CD8-positive, alpha-beta T cell (primary cell): ENCODE measurements at regions of chr10 and their contacts with region 1.

Region 1: GRCh38 chr10:67779465-67780203 is 58.4 kb downstream of the DNAJC12 start:
- DNase-seq: peak; percentile 28 to 87 (median 68)
- ATAC-seq: peak; percentile 85
- H3K4me3 ChIP-seq: no peak overlapping the region
- H3K4me3 Mint-ChIP-seq: no peak overlapping the region
- H3K27ac ChIP-seq: no peak overlapping the region
- H3K27ac Mint-ChIP-seq: no peak overlapping the region
- H3K4me1 ChIP-seq: no peaks in the 10 kb centered on the region
- H3K4me1 Mint-ChIP-seq: peaks cover 16% of the 10 kb centered on the region
- H3K27me3 ChIP-seq: no peaks in the 10 kb centered on the region
- H3K27me3 Mint-ChIP-seq: no peaks in the 10 kb centered on the region
- CTCF ChIP-seq: peak; percentile 93

Region 2: DNA sequence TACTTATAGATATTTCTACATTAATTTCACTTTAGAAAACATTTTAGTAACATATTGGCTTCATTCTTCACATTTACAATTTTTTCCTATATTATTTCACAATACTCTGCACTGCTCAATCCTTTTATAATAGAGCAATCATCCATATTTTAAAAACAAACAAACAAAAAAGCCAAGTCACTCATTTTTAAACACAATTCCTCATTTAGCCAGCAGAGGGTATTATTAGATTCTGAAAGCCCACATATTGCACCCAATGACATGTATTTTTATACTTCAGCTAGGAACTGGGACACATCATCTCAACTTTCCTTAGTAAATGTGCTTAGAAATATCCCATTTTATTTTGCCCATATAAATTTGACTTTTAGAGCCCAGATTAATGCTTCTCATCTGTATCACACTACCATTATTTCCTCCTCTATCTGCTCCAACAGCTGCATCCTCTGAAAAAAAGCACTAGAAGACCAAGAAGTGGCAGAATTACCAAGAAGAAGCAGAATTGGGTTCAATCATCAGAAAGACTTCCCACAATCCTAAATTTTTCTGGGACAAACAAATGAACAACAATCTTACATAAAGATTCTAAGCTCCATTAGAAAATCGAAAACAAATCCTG is 113.1 kb before region 1 on chr10:
- CTCF ChIA-PET with region 1: interaction called, 69 read pairs
- POLR2A ChIA-PET with region 1: interaction called, 3 read pairs
- intact Hi-C with region 1: loop called (anchors 1 kb)
- DNase-seq: peak in 2 of 9 experiments; percentile 17 to 43
- ATAC-seq: no peak
- H3K4me3 ChIP-seq: no peak overlapping the region
- H3K4me3 Mint-ChIP-seq: no peak overlapping the region
- H3K27ac ChIP-seq: no peak overlapping the region
- H3K27ac Mint-ChIP-seq: no peak overlapping the region
- H3K4me1 ChIP-seq: no peaks in the 10 kb centered on the region
- H3K4me1 Mint-ChIP-seq: no peaks in the 10 kb centered on the region
- H3K27me3 ChIP-seq: no peaks in the 10 kb centered on the region
- H3K27me3 Mint-ChIP-seq: no peaks in the 10 kb centered on the region
- CTCF ChIP-seq: peak; percentile 55

Region 3: GRCh38 chr10:67697724-67698131 is 81.9 kb before region 1 on chr10:
- CTCF ChIA-PET with region 1: interaction called, 300 read pairs
- POLR2A ChIA-PET with region 1: interaction called, 12 read pairs
- intact Hi-C with region 1: loop called (anchors 1 kb)
- DNase-seq: peak in 5 of 9 experiments; percentile 11 to 71 (median 21)
- ATAC-seq: peak; percentile 87
- H3K4me3 ChIP-seq: no peak overlapping the region
- H3K4me3 Mint-ChIP-seq: no peak overlapping the region
- H3K27ac ChIP-seq: no peak overlapping the region
- H3K27ac Mint-ChIP-seq: no peak overlapping the region
- H3K4me1 ChIP-seq: no peaks in the 10 kb centered on the region
- H3K4me1 Mint-ChIP-seq: peaks cover 4% of the 10 kb centered on the region
- H3K27me3 ChIP-seq: no peaks in the 10 kb centered on the region
- H3K27me3 Mint-ChIP-seq: peaks cover 33% of the 10 kb centered on the region
- CTCF ChIP-seq: peak; percentile 72

Region 4: GRCh38 chr10:67705921-67706320 is 73.7 kb before region 1 on chr10:
- CTCF ChIA-PET with region 1: interaction called, 20 read pairs
- POLR2A ChIA-PET with region 1: no interaction called
- intact Hi-C with region 1: no loop called
- DNase-seq: no peak
- ATAC-seq: no peak
- H3K4me3 ChIP-seq: no peak overlapping the region
- H3K4me3 Mint-ChIP-seq: no peak overlapping the region
- H3K27ac ChIP-seq: no peak overlapping the region
- H3K27ac Mint-ChIP-seq: no peak overlapping the region
- H3K4me1 ChIP-seq: no peaks in the 10 kb centered on the region
- H3K4me1 Mint-ChIP-seq: no peaks in the 10 kb centered on the region
- H3K27me3 ChIP-seq: no peaks in the 10 kb centered on the region
- H3K27me3 Mint-ChIP-seq: peaks cover 10% of the 10 kb centered on the region
- CTCF ChIP-seq: no peak

Region 5: GRCh38 chr10:67735430-67735829 is 44.2 kb before region 1 on chr10:
- CTCF ChIA-PET with region 1: interaction called, 3 read pairs
- POLR2A ChIA-PET with region 1: no interaction called
- intact Hi-C with region 1: loop called in 1 of 2 experiments (anchors 5 kb)
- DNase-seq: no peak
- ATAC-seq: no peak
- H3K4me3 ChIP-seq: no peak overlapping the region
- H3K4me3 Mint-ChIP-seq: no peak overlapping the region
- H3K27ac ChIP-seq: no peak overlapping the region
- H3K27ac Mint-ChIP-seq: no peak overlapping the region
- H3K4me1 ChIP-seq: no peaks in the 10 kb centered on the region
- H3K4me1 Mint-ChIP-seq: no peaks in the 10 kb centered on the region
- H3K27me3 ChIP-seq: no peaks in the 10 kb centered on the region
- H3K27me3 Mint-ChIP-seq: peaks cover 9% of the 10 kb centered on the region
- CTCF ChIP-seq: no peak

Region 6: DNA sequence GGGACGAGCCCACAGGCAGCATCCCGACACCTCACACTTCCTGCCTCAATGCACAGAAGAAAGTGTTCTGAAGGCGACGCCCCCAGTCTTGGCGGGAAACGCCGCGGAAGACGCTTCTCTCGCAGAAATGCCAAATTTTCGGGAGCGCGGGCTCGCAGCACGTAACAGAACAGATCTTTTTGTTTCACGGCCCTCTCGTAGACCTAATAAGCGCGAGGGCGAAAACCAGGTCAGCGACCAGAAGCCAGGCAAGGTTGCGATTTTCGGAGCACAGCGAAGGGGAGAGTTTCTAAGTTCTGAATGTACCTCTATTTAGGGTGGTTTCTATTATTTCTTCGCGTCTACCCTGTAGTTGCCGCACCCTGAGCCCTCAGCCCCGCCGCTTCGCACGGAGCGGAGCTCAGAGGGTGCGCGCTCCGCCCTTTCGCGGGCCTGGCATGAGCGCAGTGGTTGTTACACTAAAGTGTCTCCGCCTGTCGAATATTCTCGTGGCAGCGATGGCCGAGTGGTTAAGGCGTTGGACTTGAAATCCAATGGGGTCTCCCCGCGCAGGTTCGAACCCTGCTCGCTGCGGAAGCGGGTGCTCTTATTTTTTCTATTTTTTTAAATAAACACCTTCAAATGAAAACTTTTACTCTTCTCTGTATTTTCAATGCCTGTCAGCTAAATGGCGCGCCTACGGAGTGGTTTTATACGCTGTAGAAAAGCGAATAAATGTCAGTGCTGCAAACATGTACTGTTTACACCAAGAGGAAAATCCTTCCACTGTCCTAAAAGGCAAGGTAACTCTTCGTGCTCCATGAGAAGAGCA is 15.4 kb before region 1 on chr10:
- CTCF ChIA-PET with region 1: interaction called, 24 read pairs
- POLR2A ChIA-PET with region 1: interaction called, 5 read pairs
- intact Hi-C with region 1: loop called (anchors 1 to 2 kb)
- DNase-seq: peak; percentile 96 to 100 (median 97)
- ATAC-seq: peak; percentile 80
- H3K4me3 ChIP-seq: peak overlapping the region; percentile 83 to 92
- H3K4me3 Mint-ChIP-seq: peak overlapping the region; percentile 92
- H3K27ac ChIP-seq: peak overlapping the region; percentile 84 to 89
- H3K27ac Mint-ChIP-seq: peak overlapping the region; percentile 97
- H3K4me1 ChIP-seq: no peaks in the 10 kb centered on the region
- H3K4me1 Mint-ChIP-seq: peaks cover 8% of the 10 kb centered on the region
- H3K27me3 ChIP-seq: no peaks in the 10 kb centered on the region
- H3K27me3 Mint-ChIP-seq: peaks cover 2% of the 10 kb centered on the region
- CTCF ChIP-seq: no peak

Region 7: DNA sequence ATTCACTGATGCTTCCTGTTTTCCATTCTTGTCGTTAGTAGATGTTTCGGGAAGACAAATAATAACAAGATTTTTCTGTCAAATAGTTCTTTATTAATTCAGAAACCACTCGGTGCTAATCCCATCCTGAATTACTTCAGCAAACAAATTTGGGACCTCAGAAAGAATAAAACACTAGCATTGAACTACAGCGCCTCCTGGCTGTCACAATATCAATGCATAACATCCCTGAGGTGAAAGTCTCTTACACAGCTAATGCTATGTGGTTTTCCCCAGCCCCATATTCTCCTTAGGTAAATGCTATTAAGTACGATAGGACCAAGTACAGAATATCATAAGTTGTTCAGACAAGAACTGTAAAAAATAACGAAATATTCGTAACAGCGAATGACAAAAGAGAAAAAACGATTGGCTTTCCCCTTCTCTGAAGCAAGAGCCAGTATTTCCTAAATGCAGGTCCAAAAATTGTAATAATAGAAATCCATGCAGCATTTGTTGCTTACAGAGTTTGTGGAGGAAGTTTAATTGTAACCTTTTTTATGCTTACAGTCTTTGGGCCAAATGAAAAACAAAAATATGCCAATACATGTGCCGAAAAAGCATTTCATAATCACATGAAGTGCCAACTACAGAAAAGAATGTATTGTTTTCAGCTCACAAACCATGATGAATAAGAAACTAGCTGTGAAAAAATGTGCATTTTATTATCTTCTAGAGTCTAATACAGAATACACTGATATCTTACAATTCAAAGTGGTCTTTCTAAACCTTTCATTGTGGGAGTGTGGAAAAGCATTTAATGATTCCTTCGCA is 376.9 kb after region 1 on chr10:
- CTCF ChIA-PET with region 1: interaction called, 10 read pairs
- POLR2A ChIA-PET with region 1: no interaction called
- intact Hi-C with region 1: no loop called
- DNase-seq: peak; percentile 12 to 77 (median 58)
- ATAC-seq: peak; percentile 71
- H3K4me3 ChIP-seq: no peak overlapping the region
- H3K4me3 Mint-ChIP-seq: no peak overlapping the region
- H3K27ac ChIP-seq: no peak overlapping the region
- H3K27ac Mint-ChIP-seq: no peak overlapping the region
- H3K4me1 ChIP-seq: no peaks in the 10 kb centered on the region
- H3K4me1 Mint-ChIP-seq: no peaks in the 10 kb centered on the region
- H3K27me3 ChIP-seq: no peaks in the 10 kb centered on the region
- H3K27me3 Mint-ChIP-seq: peaks cover 5% of the 10 kb centered on the region
- CTCF ChIP-seq: peak; percentile 94